ENCODE measurements at regions of chr17 and their contacts with region 1.

Region 1: DNA sequence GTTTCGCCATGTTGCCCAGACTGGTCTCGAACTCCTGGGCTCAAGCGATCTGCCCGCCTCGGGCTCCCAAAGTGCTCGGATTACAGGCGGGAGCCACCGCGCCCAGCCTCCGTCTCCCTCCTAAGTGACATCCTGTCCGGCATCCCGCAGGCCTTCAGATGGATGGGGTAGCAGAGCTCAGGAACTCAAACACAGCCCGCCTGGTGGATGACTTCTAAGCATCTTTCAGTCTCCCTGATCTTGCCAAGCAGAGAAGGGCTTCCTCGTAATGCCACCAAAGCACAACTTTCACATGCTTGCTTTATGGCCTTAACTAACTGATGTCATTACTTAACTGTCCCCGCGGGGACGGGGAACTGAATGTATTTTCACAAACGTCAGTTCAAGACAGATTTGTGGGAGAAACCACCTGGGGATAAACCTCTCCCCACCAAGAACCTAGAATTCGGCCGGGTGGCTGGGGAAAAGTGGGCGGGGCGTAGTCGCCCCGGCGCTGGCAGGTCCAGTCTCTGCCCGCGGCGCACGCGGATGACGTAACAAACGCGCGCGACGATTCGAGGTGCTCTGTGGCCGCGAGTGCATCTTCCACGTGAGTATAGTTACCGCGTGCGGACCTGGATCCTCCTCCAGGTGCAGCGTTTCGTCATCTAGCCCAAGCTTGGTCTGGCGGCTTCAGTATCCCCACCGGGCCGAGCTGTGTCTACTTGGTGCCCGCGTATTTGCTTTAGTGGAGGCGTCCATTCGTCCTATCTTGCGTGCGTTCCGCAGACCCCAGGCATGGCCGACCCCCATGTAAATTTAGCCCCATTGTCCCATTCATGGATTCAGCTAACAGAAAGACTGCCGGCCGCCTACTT is at the start of gene PFAS:
- DNase-seq: peak; percentile 96
- ATAC-seq: peak; percentile 85
- total RNA-seq, gene PFAS: 13.5 to 24.1 TPM

Region 2: GRCh38 chr17:8288336-8289102 is 39.5 kb after region 1 on chr17 and contains the start of gene RANGRF:
- intact Hi-C with region 1: loop called in 1 of 2 experiments (anchors 5 kb)
- DNase-seq: peak; percentile 93
- ATAC-seq: peak; percentile 94 to 96
- total RNA-seq, gene RANGRF: 23.3 to 25.7 TPM

Region 3: DNA sequence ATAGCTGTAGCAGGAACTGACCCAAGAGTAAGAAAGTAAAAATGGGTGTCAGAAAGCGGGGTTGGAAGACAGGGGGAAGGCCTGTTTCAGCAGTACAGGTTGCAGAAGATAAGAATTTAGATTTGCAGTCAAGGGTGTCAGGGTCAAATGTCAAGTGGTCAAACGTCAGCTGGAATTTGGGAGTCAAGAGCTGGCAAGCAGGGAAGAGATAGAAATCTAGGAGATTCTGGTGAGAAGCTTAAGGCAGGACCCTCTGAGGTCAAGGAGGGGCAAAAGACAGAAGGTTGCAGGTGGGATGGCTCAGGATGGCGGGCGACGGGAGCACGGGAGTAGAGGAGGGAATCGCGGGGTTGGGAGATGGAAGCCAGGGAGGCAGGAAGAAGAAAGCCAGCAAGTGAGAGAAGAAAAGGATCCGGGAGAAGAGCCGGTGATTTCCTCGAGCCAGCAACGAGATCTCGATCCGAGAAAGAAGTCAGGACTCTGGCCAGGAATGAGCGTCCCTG is 45.9 kb after region 1 on chr17:
- intact Hi-C with region 1: loop called in 1 of 2 experiments (anchors 2 kb)
- DNase-seq: no peak
- ATAC-seq: peak; percentile 2 to 22

Region 4: GRCh38 chr17:8466456-8466855 is 217.5 kb after region 1 on chr17:
- intact Hi-C with region 1: no loop called
- DNase-seq: no peak
- ATAC-seq: no peak

Measured in left cardiac atrium (tissue), 4 donors.